Heart left ventricle (tissue), 16 donors: ENCODE measurements at regions of chr9 and their contacts with region 1.

Region 1: DNA sequence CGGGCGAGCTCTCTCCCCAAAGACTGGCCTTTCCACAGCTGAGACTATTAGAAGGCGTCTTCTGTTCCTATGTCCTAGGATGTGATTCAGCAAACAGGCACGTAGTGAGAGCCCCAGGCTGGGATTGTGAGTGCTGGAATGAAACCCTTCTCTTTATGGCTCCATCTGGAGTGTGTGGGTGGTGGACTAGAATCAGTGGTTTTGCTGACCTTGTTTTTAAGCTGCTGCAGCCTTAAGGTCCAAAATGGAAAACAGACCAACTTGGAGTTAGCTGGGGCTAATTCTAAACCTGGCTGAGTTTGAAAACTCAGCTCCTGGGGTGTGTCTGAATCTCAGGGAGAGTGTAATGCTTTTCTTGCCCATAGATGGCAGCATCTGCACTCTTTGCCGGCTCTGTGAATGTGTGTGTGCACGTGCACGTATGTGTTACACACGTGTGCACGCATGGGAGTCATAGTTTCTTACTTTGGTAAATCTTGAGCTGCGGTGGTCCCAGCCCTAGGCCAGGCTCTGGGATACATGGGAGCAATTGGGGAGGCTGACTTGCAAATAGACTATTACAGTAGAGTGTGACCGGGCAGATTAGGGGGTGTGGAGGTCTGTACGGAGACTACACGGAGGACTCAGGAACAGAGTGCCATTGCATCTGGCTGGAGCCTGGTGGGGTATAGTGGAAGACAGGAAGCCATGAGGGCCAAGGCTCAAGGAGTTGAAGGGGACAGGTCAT is 10.7 kb downstream of the GSN start:
- DNase-seq: peak; percentile 75 to 82 (median 76)
- ATAC-seq: peak; percentile 52 to 72 (median 64)
- H3K4me3 ChIP-seq: peak overlapping the region in 1 of 12 donors; percentile 7
- H3K27ac ChIP-seq: peak overlapping the region; percentile 0 to 100 (median 96)
- H3K4me1 ChIP-seq: peaks cover 31 to 96% (median 69%) of the 10 kb centered on the region in 12 donors
- H3K27me3 ChIP-seq: no peaks in the 10 kb centered on the region
- CTCF ChIP-seq: peak; percentile 73 to 93 (median 86)
- POLR2A ChIP-seq: peak in 1 of 2 donors; percentile 35

Region 2: DNA sequence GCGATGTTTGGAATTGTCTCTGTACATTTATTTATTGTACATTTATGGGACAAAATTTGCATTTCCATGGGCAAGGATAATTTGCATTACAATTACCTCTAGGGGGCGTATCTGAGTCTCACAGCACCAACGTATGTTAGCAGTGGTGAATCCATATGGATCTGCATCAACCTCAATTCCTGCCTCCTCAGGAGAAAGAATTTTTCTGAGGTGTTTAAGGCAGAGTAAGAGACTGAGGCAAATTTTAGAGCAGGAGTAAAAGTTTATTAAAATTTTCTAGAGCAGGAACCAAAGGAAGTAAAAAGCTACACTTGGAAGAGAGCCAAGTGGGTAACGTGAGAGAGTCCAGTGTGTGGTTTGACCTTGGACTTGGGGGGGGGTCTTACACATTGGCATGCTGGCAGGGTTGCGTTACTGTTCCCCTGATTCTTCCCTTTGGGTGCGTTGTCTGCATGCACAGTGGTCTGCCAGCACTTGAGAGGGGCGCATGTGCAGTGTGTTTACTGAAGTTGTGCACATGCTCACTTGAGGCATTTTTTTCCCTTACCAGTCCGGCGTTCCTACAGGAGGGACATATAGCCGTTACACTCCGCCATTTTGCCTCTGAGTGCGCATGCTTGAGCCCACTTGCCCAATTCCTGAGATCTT is 56.0 kb before region 1 on chr9:
- intact Hi-C with region 1: loop called in 2 of 10 experiments (anchors 5 to 10 kb)
- DNase-seq: no peak
- ATAC-seq: peak in 1 of 4 donors; percentile 56
- H3K4me3 ChIP-seq: no peak overlapping the region
- H3K27ac ChIP-seq: no peak overlapping the region
- H3K4me1 ChIP-seq: peaks cover 0 to 9% (median 0%) of the 10 kb centered on the region in 12 donors
- H3K27me3 ChIP-seq: no peaks in the 10 kb centered on the region
- CTCF ChIP-seq: peak; percentile 59 to 84 (median 75)
- POLR2A ChIP-seq: no peak

Region 3: DNA sequence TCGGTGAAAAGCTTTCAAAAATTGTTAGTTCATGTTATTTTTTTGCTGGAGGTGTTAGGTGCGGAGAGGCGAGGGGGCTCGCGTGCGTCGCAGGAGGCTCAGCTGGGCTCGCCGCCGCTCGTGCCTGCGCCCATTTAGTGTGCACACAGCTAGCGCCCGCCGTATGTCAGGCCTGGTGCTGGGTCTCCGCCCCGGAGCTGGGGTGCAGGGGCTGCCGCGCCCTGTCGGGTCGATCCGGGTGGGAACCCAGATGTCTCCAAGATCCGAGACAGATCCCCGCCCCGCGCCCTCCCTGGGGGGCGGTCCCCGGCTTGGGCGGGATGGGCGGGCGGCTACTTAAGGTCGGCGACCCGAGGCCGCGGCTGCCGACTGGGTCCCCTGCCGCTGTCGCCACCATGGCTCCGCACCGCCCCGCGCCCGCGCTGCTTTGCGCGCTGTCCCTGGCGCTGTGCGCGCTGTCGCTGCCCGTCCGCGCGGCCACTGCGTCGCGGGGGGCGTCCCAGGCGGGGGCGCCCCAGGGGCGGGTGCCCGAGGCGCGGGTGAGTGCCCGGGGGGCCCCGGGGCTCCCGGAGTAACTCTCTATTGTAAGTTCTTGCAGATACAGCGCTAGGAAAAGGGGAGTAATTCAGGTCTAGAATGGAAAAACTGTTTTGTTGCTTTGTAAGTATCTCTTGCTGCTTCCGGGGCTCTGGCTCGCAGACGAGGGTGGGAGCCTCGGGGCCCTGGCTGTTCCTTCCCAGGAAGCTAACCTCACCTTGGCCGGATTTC is 21.0 kb after region 1 on chr9:
- intact Hi-C with region 1: loop called in 1 of 10 experiments (anchors 2 kb)
- DNase-seq: peak; percentile 88 to 93 (median 92)
- ATAC-seq: peak; percentile 35 to 78 (median 72)
- H3K4me3 ChIP-seq: peak overlapping the region; percentile 45 to 93 (median 68)
- H3K27ac ChIP-seq: peak overlapping the region; percentile 86 to 98 (median 94)
- H3K4me1 ChIP-seq: peaks cover 17 to 94% (median 84%) of the 10 kb centered on the region in 12 donors
- H3K27me3 ChIP-seq: no peaks in the 10 kb centered on the region
- CTCF ChIP-seq: peak in 3 of 12 donors; percentile 5 to 18 (median 15)
- POLR2A ChIP-seq: peak in 1 of 2 donors; percentile 93

Region 4: DNA sequence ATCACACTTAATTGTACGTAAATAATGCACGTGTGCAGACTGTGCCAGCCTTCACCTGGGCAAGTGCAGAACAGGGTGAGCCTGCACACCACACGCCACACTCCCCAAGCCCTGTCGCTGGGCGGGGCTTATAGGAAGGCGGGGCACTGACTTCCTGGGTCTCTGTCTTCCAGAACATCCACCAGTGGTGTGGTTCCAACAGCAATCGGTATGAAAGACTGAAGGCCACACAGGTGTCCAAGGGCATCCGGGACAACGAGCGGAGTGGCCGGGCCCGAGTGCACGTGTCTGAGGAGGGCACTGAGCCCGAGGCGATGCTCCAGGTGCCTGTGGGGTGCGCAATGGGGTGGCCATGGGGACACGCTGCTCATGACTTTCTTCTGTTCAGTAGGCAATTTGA is 33.5 kb after region 1 on chr9:
- intact Hi-C with region 1: loop called in 6 of 10 experiments (anchors 5 kb)
- DNase-seq: peak in 2 of 5 donors; percentile 18 to 26
- ATAC-seq: no peak
- H3K4me3 ChIP-seq: no peak overlapping the region
- H3K27ac ChIP-seq: peak overlapping the region in 1 of 12 donors; percentile 62
- H3K4me1 ChIP-seq: peaks cover 0 to 81% (median 16%) of the 10 kb centered on the region in 12 donors
- H3K27me3 ChIP-seq: no peaks in the 10 kb centered on the region
- CTCF ChIP-seq: no peak
- POLR2A ChIP-seq: no peak

Region 5: GRCh38 chr9:121321016-121321503 is 42.4 kb after region 1 on chr9:
- intact Hi-C with region 1: loop called in 8 of 10 experiments (anchors 2 to 5 kb)
- DNase-seq: peak in 1 of 5 donors; percentile 26
- ATAC-seq: no peak
- H3K4me3 ChIP-seq: no peak overlapping the region
- H3K27ac ChIP-seq: peak overlapping the region in 11 of 12 donors; percentile 26 to 98 (median 85)
- H3K4me1 ChIP-seq: peaks cover 10 to 88% (median 67%) of the 10 kb centered on the region in 12 donors
- H3K27me3 ChIP-seq: no peaks in the 10 kb centered on the region
- CTCF ChIP-seq: no peak
- POLR2A ChIP-seq: no peak

Region 6: DNA sequence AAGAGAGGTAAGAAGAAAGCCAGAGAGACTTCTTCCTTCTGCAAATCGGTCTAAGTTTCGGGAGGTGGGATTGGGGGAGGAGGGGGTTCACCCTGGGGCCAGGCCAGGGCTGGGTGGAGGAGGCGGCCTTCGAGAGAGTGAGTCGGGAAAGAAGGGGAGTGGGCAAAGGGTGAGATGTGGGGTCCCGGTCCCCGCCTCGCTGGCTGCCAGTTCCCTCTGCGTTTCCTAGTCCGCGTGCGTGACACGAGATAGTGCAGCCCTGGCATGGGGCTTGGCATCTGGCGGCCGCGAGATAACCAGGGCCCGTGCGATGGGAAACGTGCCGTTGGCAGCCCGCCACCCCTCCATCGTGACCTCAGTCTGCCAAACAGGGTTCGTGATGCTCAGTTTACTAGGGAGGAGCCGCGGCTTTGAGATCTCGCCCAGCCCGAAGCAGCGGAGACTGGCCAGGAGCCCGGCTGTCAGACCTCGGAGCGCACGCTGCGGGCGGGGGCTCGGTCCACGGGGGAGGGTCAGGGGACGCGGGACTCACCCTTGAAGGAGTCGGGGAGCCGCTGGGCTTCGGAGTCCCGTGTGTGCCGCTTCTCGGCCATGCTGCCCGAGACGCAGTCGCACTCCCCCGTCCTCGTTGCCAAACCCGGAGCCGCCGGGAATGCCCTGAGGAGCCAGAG is 91.0 kb after region 1 on chr9 and contains the start of gene STOM:
- intact Hi-C with region 1: loop called in 6 of 10 experiments (anchors 2 to 5 kb)
- DNase-seq: peak; percentile 89 to 95 (median 93)
- ATAC-seq: peak; percentile 63 to 86 (median 74)
- H3K4me3 ChIP-seq: peak within 1 kb of the TSS; percentile 19 to 88 (median 78)
- H3K27ac ChIP-seq: peak within 1 kb of the TSS; percentile 91 to 99 (median 96)
- H3K4me1 ChIP-seq: peaks cover 12 to 78% (median 69%) of the 10 kb centered on the region in 12 donors
- H3K27me3 ChIP-seq: no peaks in the 10 kb centered on the region
- CTCF ChIP-seq: no peak
- POLR2A ChIP-seq: peak; percentile 94 to 100
- total RNA-seq, gene STOM: 125 to 239 (median 154) TPM

Region 7: DNA sequence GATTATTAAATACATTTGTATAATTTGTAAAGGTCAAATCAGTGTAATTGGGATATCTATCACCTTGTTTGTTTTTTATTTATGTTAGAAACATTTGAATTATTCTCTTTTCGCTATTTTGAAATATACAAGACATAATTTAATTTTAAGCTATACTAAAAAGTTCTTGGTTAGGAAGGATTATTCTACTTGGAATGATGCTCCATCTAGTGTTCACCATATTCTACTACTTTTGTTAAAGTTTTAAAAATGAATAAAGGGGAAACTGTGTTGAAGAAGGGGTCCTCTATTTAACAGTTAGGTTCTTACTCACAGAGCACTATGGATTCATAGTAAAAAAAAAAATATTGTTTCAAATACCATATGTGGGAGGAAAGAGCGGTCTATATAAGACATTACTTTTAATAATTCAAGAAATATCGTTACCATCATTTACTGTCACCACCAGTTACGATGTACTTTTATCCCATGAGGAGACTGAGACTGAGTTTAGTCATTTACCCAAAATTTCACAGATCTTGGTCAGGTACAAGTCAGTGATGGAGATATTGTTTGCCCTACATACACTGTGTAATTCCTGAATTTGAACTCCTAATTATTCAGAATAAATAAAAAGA is 97.6 kb after region 1 on chr9:
- intact Hi-C with region 1: loop called in 8 of 10 experiments (anchors 2 to 5 kb)
- DNase-seq: no peak
- ATAC-seq: no peak
- H3K4me3 ChIP-seq: no peak overlapping the region
- H3K27ac ChIP-seq: peak overlapping the region in 1 of 12 donors; percentile 4
- H3K4me1 ChIP-seq: peaks cover 4 to 43% (median 29%) of the 10 kb centered on the region in 12 donors
- H3K27me3 ChIP-seq: no peaks in the 10 kb centered on the region
- CTCF ChIP-seq: peak in 11 of 12 donors; percentile 39 to 79 (median 64)
- POLR2A ChIP-seq: no peak